ENCODE measurements at regions of chr10 and their contacts with region 1.

Region 1: DNA sequence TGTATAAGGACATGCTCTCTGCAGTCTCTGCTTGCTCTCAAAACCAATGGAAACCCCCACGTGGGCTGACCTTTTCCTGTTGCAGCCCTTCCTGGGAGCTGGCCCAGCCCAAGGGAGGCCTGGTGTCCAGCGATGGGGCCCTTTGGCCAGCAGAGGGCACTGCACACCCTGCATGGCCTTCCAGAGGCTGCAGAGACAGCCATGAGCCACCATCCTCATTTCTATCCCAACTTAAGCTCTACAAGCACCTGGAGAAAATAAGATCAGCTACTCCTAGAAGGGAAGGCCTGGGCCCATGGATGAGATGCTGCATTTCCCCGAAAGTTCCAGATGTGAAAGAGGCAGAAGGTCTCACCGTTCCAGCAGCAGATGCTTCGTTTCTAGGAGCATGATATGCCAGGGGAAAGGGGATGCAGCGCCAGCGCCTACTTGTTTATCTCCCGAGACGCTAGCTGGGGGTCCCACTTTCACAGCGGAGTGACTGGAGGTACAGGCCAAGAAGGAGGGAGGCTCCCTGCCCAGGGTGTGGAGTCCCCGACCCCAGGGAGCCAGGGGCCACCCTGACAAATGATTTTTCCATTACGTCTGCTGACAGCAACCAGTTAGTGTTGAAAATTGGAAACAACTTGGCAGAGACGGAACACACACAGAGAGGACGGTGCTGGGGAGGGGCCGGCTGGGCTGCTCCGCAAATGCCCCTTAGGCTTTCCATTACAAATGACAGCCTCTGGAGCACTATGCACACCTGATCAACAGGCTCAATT is 106.4 kb downstream of the ZRANB1 start:
- DNase-seq: peak; percentile 86 to 93
- H3K4me3 ChIP-seq: no peak overlapping the region
- H3K4me3 Mint-ChIP-seq: peak overlapping the region; percentile 42
- H3K27ac Mint-ChIP-seq: peak overlapping the region; percentile 78
- H3K4me1 ChIP-seq: peaks cover 41% of the 10 kb centered on the region
- H3K4me1 Mint-ChIP-seq: peaks cover 22% of the 10 kb centered on the region
- H3K27me3 ChIP-seq: no peaks in the 10 kb centered on the region
- H3K27me3 Mint-ChIP-seq: no peaks in the 10 kb centered on the region
- CTCF ChIP-seq: peak; percentile 93 to 97

Region 2: DNA sequence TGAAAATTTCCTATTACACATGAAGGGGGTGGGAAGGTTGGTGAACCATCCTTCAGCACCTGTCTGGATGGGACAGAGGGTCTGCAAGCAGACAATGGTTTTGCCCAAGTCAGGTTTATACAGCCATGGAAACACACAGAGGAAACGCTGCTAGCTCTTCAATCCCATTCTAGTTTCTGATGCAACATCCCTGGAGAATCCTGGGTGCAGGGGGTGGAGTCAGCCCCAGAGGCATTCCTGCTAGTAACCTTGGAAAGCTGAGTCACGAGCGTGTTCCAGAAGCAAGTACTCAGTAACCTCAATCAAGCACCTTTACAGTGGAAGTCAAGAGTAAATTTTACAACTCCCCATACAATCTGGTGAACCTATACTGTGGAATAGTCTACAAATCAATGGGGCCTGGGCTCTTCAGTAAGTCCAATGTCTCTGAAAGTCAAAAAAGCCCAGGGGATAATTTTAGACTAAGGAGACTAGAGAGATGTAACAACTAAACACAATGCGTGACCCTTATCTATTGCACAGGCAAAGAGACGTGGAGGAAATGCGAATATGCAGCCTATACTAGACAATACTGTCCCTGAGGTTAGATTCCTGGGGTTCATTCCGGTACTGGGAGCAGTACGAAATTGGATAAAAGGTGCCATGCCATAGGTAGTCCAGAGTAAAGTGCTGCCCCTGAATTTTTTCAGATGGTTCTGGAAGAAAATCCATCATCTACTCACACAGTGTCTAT is 11.0 kb before region 1 on chr10:
- CTCF ChIA-PET with region 1: interaction called, 11 read pairs
- POLR2A ChIA-PET with region 1: no interaction called
- intact Hi-C with region 1: no loop called
- DNase-seq: peak; percentile 23 to 51
- H3K4me3 ChIP-seq: no peak overlapping the region
- H3K4me3 Mint-ChIP-seq: no peak overlapping the region
- H3K27ac Mint-ChIP-seq: no peak overlapping the region
- H3K4me1 ChIP-seq: peaks cover 28% of the 10 kb centered on the region
- H3K4me1 Mint-ChIP-seq: peaks cover 30% of the 10 kb centered on the region
- H3K27me3 ChIP-seq: no peaks in the 10 kb centered on the region
- H3K27me3 Mint-ChIP-seq: no peaks in the 10 kb centered on the region
- CTCF ChIP-seq: no peak

Region 3: GRCh38 chr10:125060826-125061556 is 12.7 kb after region 1 on chr10:
- CTCF ChIA-PET with region 1: interaction called, 33 read pairs
- POLR2A ChIA-PET with region 1: no interaction called
- intact Hi-C with region 1: loop called (anchors 1 kb)
- DNase-seq: peak; percentile 62 to 77
- H3K4me3 ChIP-seq: no peak overlapping the region
- H3K4me3 Mint-ChIP-seq: no peak overlapping the region
- H3K27ac Mint-ChIP-seq: peak overlapping the region; percentile 44
- H3K4me1 ChIP-seq: peaks cover 32% of the 10 kb centered on the region
- H3K4me1 Mint-ChIP-seq: peaks cover 20% of the 10 kb centered on the region
- H3K27me3 ChIP-seq: no peaks in the 10 kb centered on the region
- H3K27me3 Mint-ChIP-seq: no peaks in the 10 kb centered on the region
- CTCF ChIP-seq: peak; percentile 80

Region 4: GRCh38 chr10:125337510-125337909 is 289.2 kb after region 1 on chr10:
- CTCF ChIA-PET with region 1: no interaction called
- POLR2A ChIA-PET with region 1: no interaction called
- intact Hi-C with region 1: no loop called
- DNase-seq: no peak
- H3K4me3 ChIP-seq: no peak overlapping the region
- H3K4me3 Mint-ChIP-seq: no peak overlapping the region
- H3K27ac Mint-ChIP-seq: no peak overlapping the region
- H3K4me1 ChIP-seq: no peaks in the 10 kb centered on the region
- H3K4me1 Mint-ChIP-seq: no peaks in the 10 kb centered on the region
- H3K27me3 ChIP-seq: no peaks in the 10 kb centered on the region
- H3K27me3 Mint-ChIP-seq: no peaks in the 10 kb centered on the region
- CTCF ChIP-seq: peak in 1 of 2 experiments; percentile 20

Region 5: DNA sequence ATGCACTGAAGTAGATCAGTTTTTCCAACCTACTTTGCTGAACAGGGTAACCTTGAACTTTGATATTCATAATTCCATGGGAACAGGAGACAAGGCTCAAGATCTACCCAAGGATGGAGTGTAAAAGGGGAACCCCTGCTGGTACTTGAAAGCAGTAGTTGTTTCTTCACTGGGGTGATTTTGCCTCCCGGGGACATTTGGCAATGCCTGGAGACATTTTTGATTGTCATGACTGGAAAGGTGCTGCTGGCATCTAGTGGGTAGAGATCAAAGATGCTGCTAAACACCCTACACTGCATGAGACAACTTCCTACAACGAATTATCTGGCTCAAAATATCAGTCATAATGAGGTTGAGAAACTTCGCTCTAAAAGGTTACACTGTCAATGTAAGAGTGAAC is 326.9 kb after region 1 on chr10:
- CTCF ChIA-PET with region 1: no interaction called
- POLR2A ChIA-PET with region 1: no interaction called
- intact Hi-C with region 1: loop called (anchors 1 kb)
- DNase-seq: peak; percentile 32 to 37
- H3K4me3 ChIP-seq: no peak overlapping the region
- H3K4me3 Mint-ChIP-seq: no peak overlapping the region
- H3K27ac Mint-ChIP-seq: no peak overlapping the region
- H3K4me1 ChIP-seq: no peaks in the 10 kb centered on the region
- H3K4me1 Mint-ChIP-seq: no peaks in the 10 kb centered on the region
- H3K27me3 ChIP-seq: no peaks in the 10 kb centered on the region; the same call in 1 of the 2 replicates
- H3K27me3 Mint-ChIP-seq: peaks cover 4% of the 10 kb centered on the region
- CTCF ChIP-seq: peak; percentile 21 to 47

Region 6: DNA sequence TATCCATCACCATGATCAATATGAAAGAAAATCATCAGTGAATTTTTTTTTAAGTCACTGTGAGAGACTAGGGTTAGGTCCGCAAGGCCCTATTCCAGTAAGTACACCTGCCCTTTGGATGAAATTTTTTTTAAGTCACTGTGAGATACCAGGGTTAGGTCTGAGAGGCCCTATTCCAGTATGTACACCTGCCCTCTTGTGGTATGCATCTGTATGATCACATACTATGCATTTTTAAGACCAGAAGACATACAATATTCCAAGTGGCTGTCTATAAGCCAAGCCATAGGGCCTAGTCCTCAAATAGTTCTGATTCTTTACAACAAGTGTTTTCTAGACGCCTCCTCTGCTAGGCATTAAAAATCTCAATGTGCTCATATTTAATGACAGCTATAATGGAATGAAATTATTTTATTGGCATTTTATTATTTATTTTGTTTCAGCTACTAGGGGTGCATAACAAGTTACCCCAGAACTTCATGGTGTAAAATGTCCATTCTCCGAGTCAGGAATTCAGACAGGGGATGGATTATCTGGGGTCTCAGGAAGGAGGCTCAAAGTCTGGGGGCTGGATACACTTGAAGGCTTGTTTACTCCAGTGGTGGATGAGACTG is 581.6 kb after region 1 on chr10:
- CTCF ChIA-PET with region 1: no interaction called
- POLR2A ChIA-PET with region 1: interaction called, 3 read pairs
- intact Hi-C with region 1: loop called (anchors 5 kb)
- DNase-seq: peak in 1 of 2 experiments; percentile 57
- H3K4me3 ChIP-seq: no peak overlapping the region
- H3K4me3 Mint-ChIP-seq: no peak overlapping the region
- H3K27ac Mint-ChIP-seq: no peak overlapping the region
- H3K4me1 ChIP-seq: no peaks in the 10 kb centered on the region
- H3K4me1 Mint-ChIP-seq: no peaks in the 10 kb centered on the region
- H3K27me3 ChIP-seq: no peaks in the 10 kb centered on the region
- H3K27me3 Mint-ChIP-seq: peaks cover 25% of the 10 kb centered on the region
- CTCF ChIP-seq: peak; percentile 59 to 74

Measured in Caco-2 (cell line).